MCF 10A (cell line): ENCODE measurements at regions of chr12 and their contacts with region 1.

Region 1: GRCh38 chr12:7162691-7163114 is 26.8 kb upstream of the PEX5 start:
- DNase-seq: peak; percentile 68
- H3K4me3 Mint-ChIP-seq: no peak overlapping the region
- H3K27ac Mint-ChIP-seq: no peak overlapping the region
- H3K4me1 Mint-ChIP-seq: peaks cover 26% of the 10 kb centered on the region
- H3K27me3 Mint-ChIP-seq: no peaks in the 10 kb centered on the region
- CTCF ChIP-seq: peak; percentile 25

Region 2: DNA sequence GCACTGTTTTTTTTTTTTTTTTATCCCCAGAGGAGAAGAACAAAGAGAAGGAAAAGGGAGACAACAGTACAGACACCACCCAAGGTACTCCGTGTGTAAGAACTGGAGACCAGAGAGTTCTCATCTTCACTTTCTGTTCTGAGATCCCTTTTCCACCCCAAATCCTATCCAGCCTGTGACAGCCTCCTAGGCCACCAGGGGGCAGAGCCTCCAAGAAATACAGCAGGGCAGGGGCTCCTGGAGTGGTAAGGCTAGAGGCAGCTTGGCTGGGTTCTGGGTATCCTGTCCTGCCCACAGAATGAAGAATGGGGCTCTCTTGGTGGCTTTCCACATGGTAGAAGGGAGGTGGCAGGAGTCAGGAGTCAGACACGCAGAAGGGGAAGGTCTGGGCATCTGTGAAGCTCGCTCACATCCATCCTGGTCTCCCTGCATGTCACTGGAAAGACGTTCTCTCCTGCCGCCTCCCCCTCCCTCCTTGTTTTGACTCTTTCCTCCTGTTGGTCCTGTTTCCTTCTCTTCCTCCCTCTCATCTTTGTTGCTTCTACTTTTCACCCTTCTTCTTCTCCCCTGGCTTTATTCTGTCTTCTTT is 20.6 kb before region 1 on chr12:
- CTCF ChIA-PET with region 1: interaction called, 106 read pairs
- POLR2A ChIA-PET with region 1: interaction called, 4 read pairs
- intact Hi-C with region 1: no loop called
- DNase-seq: peak; percentile 70
- H3K4me3 Mint-ChIP-seq: no peak overlapping the region
- H3K27ac Mint-ChIP-seq: no peak overlapping the region
- H3K4me1 Mint-ChIP-seq: no peaks in the 10 kb centered on the region
- H3K27me3 Mint-ChIP-seq: no peaks in the 10 kb centered on the region
- CTCF ChIP-seq: peak; percentile 45

Region 3: DNA sequence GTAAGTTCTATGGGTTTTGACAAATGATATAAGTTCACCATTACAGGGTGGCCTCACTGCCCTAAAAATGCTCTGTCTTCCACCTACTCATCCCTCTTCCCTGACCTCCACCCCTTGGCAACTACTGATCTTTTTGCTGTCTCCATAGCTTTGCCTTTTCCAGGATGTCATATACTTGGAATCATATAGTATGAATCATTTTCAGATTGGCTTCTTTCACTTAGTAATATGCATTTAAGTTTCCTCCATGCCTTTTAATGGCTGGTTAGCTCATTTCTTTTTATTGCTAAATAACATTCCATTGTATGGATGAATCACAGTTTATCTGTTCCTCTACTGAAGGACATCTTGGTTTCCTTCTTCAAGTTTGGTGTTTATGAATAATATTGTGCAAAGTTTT is 12.8 kb after region 1 on chr12:
- CTCF ChIA-PET with region 1: interaction called, 13 read pairs
- POLR2A ChIA-PET with region 1: interaction called, 5 read pairs
- intact Hi-C with region 1: no loop called
- DNase-seq: peak; percentile 16
- H3K4me3 Mint-ChIP-seq: no peak overlapping the region
- H3K27ac Mint-ChIP-seq: no peak overlapping the region
- H3K4me1 Mint-ChIP-seq: peaks cover 8% of the 10 kb centered on the region
- H3K27me3 Mint-ChIP-seq: no peaks in the 10 kb centered on the region
- CTCF ChIP-seq: no peak

Region 4: DNA sequence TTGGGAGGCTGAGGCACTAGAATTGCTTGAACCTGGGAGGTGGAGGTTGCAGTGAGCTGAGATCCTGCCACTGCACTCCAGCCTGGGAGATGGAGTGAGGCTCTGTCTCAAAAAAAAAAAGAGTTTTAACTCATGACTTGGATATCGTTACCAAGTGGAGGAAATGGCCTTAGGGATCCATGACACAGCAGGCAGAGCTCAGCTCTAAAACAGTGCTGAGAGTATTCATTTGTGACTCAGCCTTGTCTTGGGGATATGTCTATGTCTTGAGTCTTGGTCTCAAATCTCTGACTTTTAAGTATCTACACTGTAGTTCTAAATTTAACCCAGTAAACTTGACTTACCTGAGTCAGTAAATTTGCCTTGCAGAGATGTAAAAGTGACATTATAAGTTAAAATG is 18.0 kb after region 1 on chr12:
- CTCF ChIA-PET with region 1: interaction called, 13 read pairs
- POLR2A ChIA-PET with region 1: interaction called, 3 read pairs
- intact Hi-C with region 1: no loop called
- DNase-seq: no peak
- H3K4me3 Mint-ChIP-seq: no peak overlapping the region
- H3K27ac Mint-ChIP-seq: no peak overlapping the region
- H3K4me1 Mint-ChIP-seq: peaks cover under 1% of the 10 kb centered on the region
- H3K27me3 Mint-ChIP-seq: no peaks in the 10 kb centered on the region
- CTCF ChIP-seq: no peak

Region 5: DNA sequence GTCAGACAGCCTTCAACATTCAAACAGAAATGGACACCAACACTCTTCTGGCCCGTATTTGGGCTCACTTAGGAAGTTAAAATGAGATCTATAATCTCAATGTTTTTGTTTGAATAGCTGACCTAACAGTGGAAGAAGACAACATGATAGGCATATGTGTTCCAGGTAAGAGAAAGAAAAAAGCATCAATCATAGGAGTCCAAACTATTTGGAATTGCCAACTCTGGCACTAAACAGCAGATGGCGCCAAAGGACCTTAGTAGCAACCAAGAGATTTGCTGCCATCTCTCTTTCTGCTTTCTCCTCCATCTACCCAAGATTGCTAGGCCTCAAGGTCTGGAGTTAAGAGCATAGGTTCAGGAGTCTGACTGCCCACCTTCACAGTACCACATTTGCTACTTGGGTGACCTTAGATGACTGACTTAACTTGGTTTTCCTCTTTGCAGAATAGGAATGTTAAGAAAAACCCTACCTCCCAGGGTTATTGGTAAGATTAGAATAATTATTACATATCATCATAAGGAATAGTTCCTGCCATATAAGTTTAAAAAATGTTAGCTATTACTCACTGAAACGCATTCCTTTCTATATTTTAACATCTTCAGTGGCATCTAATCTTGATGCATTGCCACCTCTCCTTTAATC is 57.0 kb after region 1 on chr12:
- CTCF ChIA-PET with region 1: no interaction called
- POLR2A ChIA-PET with region 1: no interaction called
- intact Hi-C with region 1: no loop called
- DNase-seq: peak; percentile 80
- H3K4me3 Mint-ChIP-seq: no peak overlapping the region
- H3K27ac Mint-ChIP-seq: no peak overlapping the region
- H3K4me1 Mint-ChIP-seq: no peaks in the 10 kb centered on the region
- H3K27me3 Mint-ChIP-seq: peaks cover 23% of the 10 kb centered on the region
- CTCF ChIP-seq: peak; percentile 84